ENCODE measurements at regions of chr9 and their contacts with region 1.

Region 1: GRCh38 chr9:109098171-109098959 is 21.4 kb downstream of the TMEM245 start:
- DNase-seq: no peak
- ATAC-seq: no peak
- H3K4me3 Mint-ChIP-seq: no peak overlapping the region
- H3K27ac Mint-ChIP-seq: peak overlapping the region; percentile 89
- H3K4me1 Mint-ChIP-seq: peaks cover 92% of the 10 kb centered on the region
- H3K27me3 Mint-ChIP-seq: no peaks in the 10 kb centered on the region

Region 2: GRCh38 chr9:109035684-109036423 is 62.5 kb before region 1 on chr9:
- CTCF ChIA-PET with region 1: no interaction called
- POLR2A ChIA-PET with region 1: no interaction called
- intact Hi-C with region 1: no loop called
- DNase-seq: no peak
- ATAC-seq: no peak
- H3K4me3 Mint-ChIP-seq: no peak overlapping the region
- H3K27ac Mint-ChIP-seq: no peak overlapping the region
- H3K4me1 Mint-ChIP-seq: peaks cover 2% of the 10 kb centered on the region
- H3K27me3 Mint-ChIP-seq: no peaks in the 10 kb centered on the region

Region 3: DNA sequence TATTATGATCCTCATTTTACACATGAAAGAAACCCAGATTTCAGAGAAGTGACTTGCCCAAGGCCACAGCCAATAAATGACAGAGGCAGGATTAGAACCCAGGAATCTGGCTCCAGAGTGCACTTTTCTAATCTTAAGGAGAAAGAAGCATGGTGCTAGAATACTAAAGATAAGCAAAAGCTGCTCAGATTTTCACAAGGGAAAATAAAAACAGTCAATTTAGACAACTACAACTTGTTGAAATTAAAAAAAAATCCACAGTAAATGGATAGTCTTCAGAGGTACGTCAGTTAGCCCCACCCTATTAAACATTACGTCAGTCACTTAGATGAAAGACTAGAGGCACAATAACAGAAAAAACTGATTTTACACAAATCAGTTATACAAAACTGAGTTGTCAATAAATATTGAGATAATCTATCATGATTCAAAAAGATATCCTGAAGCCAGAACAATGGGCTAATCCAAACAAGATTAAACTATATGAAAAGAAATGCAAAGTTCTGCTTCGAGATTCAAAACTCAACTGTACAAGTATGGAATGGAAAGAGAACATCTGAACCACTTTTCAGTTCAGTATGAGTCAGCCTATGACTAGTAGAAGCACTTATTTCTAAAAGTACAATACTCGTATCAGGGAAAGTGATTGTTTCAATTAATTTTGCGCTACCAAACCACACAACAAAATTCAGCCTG is 12.1 kb after region 1 on chr9:
- CTCF ChIA-PET with region 1: interaction called, 8 read pairs
- POLR2A ChIA-PET with region 1: interaction called, 3 read pairs
- intact Hi-C with region 1: loop called (anchors 1 kb)
- DNase-seq: no peak
- ATAC-seq: peak; percentile 64
- H3K4me3 Mint-ChIP-seq: peak overlapping the region; percentile 47
- H3K27ac Mint-ChIP-seq: peak overlapping the region; percentile 82
- H3K4me1 Mint-ChIP-seq: peaks cover 89% of the 10 kb centered on the region
- H3K27me3 Mint-ChIP-seq: no peaks in the 10 kb centered on the region

Region 4: GRCh38 chr9:109192732-109193361 is 94.5 kb after region 1 on chr9:
- CTCF ChIA-PET with region 1: no interaction called
- POLR2A ChIA-PET with region 1: no interaction called
- intact Hi-C with region 1: no loop called
- DNase-seq: peak; percentile 16
- ATAC-seq: no peak
- H3K4me3 Mint-ChIP-seq: no peak overlapping the region
- H3K27ac Mint-ChIP-seq: no peak overlapping the region
- H3K4me1 Mint-ChIP-seq: no peaks in the 10 kb centered on the region
- H3K27me3 Mint-ChIP-seq: peaks cover 4% of the 10 kb centered on the region

Region 5: GRCh38 chr9:109411798-109412352 is 313.5 kb after region 1 on chr9:
- CTCF ChIA-PET with region 1: no interaction called
- POLR2A ChIA-PET with region 1: no interaction called
- intact Hi-C with region 1: loop called (anchors 5 kb)
- DNase-seq: peak; percentile 66
- ATAC-seq: peak; percentile 57
- H3K4me3 Mint-ChIP-seq: no peak overlapping the region
- H3K27ac Mint-ChIP-seq: peak overlapping the region; percentile 67
- H3K4me1 Mint-ChIP-seq: peaks cover 42% of the 10 kb centered on the region
- H3K27me3 Mint-ChIP-seq: peaks cover 17% of the 10 kb centered on the region

Measured in activated CD4-positive, alpha-beta T cell treated with anti-CD3 and anti-CD28 coated beads for 36 hours (primary cell).